CD8-positive, alpha-beta T cell (primary cell): ENCODE measurements at regions of chr2 and their contacts with region 1.

Region 1: GRCh38 chr2:60674524-60675165 is 81.4 kb upstream of the PAPOLG start:
- DNase-seq: peak; percentile 53 to 85 (median 77)
- ATAC-seq: peak; percentile 84
- H3K4me3 ChIP-seq: no peak overlapping the region
- H3K4me3 Mint-ChIP-seq: no peak overlapping the region
- H3K27ac ChIP-seq: no peak overlapping the region
- H3K27ac Mint-ChIP-seq: no peak overlapping the region
- H3K4me1 ChIP-seq: no peaks in the 10 kb centered on the region
- H3K4me1 Mint-ChIP-seq: peaks cover 3% of the 10 kb centered on the region
- H3K27me3 ChIP-seq: no peaks in the 10 kb centered on the region
- H3K27me3 Mint-ChIP-seq: peaks cover 2% of the 10 kb centered on the region
- CTCF ChIP-seq: peak; percentile 95

Region 2: DNA sequence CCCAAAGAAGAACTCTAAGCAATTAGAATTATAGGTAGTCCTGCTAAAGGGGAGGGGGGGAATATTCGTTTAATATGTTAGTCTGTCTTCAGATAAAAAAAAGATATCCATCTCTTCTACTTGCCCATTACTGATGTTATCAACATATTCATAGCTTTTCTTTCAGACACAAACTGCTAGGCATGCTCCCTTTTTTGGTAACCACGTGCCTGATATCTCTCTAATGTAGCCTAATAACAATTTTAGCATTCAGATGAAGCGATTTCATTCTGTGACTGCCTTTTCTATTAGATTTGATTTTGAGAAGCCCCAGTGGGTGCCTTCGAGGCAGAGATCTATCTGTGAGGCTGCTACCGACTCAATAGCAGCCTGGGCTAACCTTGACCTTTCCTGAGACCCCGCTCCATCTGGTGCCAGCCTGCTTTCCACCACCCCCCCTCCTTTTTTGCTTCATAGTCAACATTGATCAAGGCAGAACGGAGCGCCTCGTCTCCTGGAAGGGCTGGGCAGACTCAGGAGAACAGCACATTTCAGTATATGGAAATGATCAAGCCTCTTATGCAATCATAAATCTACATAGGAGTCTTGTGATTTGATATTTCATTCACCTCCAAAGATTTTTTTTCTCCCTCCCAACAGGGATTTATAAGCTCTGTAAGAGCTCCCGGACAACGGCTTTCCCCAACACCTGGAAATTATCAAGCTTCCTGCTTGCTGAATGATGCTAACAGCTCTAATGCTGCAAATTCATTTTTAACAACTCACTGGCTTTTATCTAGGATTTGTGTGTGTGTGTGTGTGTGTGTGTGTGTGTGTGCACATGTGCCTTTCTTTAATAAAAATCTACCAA is 106.5 kb before region 1 on chr2:
- CTCF ChIA-PET with region 1: no interaction called
- POLR2A ChIA-PET with region 1: no interaction called
- intact Hi-C with region 1: no loop called
- DNase-seq: no peak
- ATAC-seq: no peak
- H3K4me3 ChIP-seq: no peak overlapping the region
- H3K4me3 Mint-ChIP-seq: no peak overlapping the region
- H3K27ac ChIP-seq: no peak overlapping the region
- H3K27ac Mint-ChIP-seq: no peak overlapping the region
- H3K4me1 ChIP-seq: peaks cover 11% of the 10 kb centered on the region
- H3K4me1 Mint-ChIP-seq: no peaks in the 10 kb centered on the region
- H3K27me3 ChIP-seq: peaks cover 8 to 22% of the 10 kb centered on the region in 2 experiments
- H3K27me3 Mint-ChIP-seq: peaks cover 23% of the 10 kb centered on the region
- CTCF ChIP-seq: no peak

Region 3: GRCh38 chr2:60634438-60634837 is 40.2 kb before region 1 on chr2:
- CTCF ChIA-PET with region 1: interaction called, 13 read pairs
- POLR2A ChIA-PET with region 1: no interaction called
- intact Hi-C with region 1: no loop called
- DNase-seq: no peak
- ATAC-seq: no peak
- H3K4me3 ChIP-seq: no peak overlapping the region
- H3K4me3 Mint-ChIP-seq: no peak overlapping the region
- H3K27ac ChIP-seq: no peak overlapping the region
- H3K27ac Mint-ChIP-seq: no peak overlapping the region
- H3K4me1 ChIP-seq: no peaks in the 10 kb centered on the region
- H3K4me1 Mint-ChIP-seq: no peaks in the 10 kb centered on the region
- H3K27me3 ChIP-seq: no peaks in the 10 kb centered on the region
- H3K27me3 Mint-ChIP-seq: peaks cover 15% of the 10 kb centered on the region
- CTCF ChIP-seq: no peak

Region 4: GRCh38 chr2:60693551-60693950 is 18.9 kb after region 1 on chr2:
- CTCF ChIA-PET with region 1: interaction called, 12 read pairs
- POLR2A ChIA-PET with region 1: no interaction called
- intact Hi-C with region 1: no loop called
- DNase-seq: no peak
- ATAC-seq: no peak
- H3K4me3 ChIP-seq: no peak overlapping the region
- H3K4me3 Mint-ChIP-seq: no peak overlapping the region
- H3K27ac ChIP-seq: no peak overlapping the region
- H3K27ac Mint-ChIP-seq: no peak overlapping the region
- H3K4me1 ChIP-seq: no peaks in the 10 kb centered on the region
- H3K4me1 Mint-ChIP-seq: no peaks in the 10 kb centered on the region
- H3K27me3 ChIP-seq: no peaks in the 10 kb centered on the region
- H3K27me3 Mint-ChIP-seq: peaks cover 3% of the 10 kb centered on the region
- CTCF ChIP-seq: no peak